Activated CD4-positive, alpha-beta memory T cell treated with anti-CD3 and anti-CD28 coated beads for 36 hours (primary cell): ENCODE measurements at regions of chr5 and their contacts with region 1.

Region 1: DNA sequence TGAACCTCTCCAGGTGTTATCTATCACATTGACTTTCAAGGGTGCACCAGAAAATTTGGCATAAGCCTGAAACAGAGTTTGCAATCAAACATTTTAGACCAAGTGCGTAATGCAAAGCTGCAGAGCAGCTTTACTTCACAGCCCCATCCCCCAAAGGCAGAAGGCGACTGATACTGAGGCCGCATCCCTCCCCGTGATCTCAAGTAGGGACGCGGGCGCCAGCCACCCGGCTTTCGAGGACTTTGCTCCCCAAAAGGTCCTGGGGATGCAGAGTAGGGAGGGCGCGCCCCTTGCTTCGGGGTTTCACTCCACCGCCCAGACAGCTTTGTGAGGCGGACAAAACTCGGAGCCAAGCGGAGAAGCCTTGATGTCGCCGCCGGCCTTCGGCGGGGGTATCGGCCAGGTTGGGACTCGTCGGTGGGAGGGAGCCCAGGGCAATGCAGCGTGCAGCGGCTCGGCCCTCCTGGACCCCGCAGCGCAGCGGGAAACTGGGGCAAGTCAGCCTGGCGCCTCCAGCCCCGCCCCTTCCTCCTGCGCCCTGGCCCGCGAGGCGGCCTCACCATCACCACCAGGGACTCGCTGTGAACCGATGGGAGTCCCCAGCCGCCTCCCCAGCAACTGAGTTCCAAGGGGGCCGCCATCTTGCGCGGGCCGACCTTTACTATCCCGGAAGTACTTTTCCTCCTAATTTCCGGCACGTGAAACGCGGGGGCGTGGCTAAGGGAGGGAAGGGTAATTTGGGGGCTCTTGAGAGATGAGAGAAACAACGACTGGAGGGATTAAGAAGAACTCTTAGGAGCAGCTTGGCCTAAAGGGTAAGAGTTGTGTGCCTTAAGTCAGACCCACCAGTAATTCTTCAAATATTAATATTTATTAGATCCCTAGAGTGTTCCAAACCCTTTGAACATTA is at the start of gene MTX3:
- DNase-seq: peak; percentile 93
- H3K4me3 Mint-ChIP-seq: peak within 1 kb of the TSS; percentile 84
- H3K27ac Mint-ChIP-seq: peak within 1 kb of the TSS; percentile 96
- H3K4me1 Mint-ChIP-seq: peaks cover 40% of the 10 kb centered on the region
- H3K27me3 Mint-ChIP-seq: peaks cover 2% of the 10 kb centered on the region
- total RNA-seq, gene MTX3: 13.3 to 16.8 TPM

Region 2: GRCh38 chr5:79560771-79561524 is 429.9 kb before region 1 on chr5:
- CTCF ChIA-PET with region 1: no interaction called
- POLR2A ChIA-PET with region 1: no interaction called
- intact Hi-C with region 1: loop called (anchors 1 kb)
- DNase-seq: peak; percentile 51
- H3K4me3 Mint-ChIP-seq: peak overlapping the region; percentile 30
- H3K27ac Mint-ChIP-seq: peak overlapping the region; percentile 99
- H3K4me1 Mint-ChIP-seq: peaks cover 42% of the 10 kb centered on the region
- H3K27me3 Mint-ChIP-seq: peaks cover 1% of the 10 kb centered on the region

Region 3: DNA sequence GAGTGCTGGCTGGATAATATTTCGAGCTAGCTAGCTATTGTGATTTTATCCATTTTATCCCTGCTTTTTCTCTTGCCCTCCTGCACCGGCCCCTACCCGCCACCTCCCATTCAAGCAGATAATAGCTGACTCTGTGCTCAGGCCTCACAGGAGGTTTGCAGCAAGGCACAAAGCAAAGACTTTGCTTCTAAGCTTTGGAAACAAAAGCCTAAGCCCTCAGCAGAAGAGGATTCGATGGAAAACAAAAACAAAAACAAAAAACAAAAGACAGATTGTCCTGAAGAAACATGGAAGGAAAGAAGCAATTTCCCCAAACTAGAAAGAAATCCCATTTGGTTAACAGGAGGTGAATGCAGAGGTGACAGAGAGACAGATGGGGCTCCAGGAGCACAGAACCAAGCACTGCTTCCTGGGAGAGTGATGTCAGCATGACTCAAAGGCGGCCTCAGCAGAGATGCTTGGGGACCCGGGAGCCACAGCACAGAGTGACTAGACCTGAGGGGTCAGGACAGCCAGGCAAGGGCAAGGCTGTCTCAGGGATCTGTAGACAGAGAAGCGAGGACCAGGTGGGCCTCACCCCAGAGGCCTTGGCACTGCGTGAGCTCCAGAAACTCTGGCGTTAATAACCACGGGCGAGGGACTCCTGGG is 28.2 kb before region 1 on chr5:
- CTCF ChIA-PET with region 1: interaction called, 9 read pairs
- POLR2A ChIA-PET with region 1: interaction called, 37 read pairs
- intact Hi-C with region 1: loop called (anchors 1 kb)
- DNase-seq: peak; percentile 85
- H3K4me3 Mint-ChIP-seq: peak overlapping the region; percentile 45
- H3K27ac Mint-ChIP-seq: peak overlapping the region; percentile 92
- H3K4me1 Mint-ChIP-seq: peaks cover 34% of the 10 kb centered on the region
- H3K27me3 Mint-ChIP-seq: peaks cover 22% of the 10 kb centered on the region

Region 4: GRCh38 chr5:80060966-80061365 is 70.1 kb after region 1 on chr5:
- CTCF ChIA-PET with region 1: interaction called, 4 read pairs
- POLR2A ChIA-PET with region 1: interaction called, 4 read pairs
- intact Hi-C with region 1: loop called (anchors 1 kb)
- DNase-seq: no peak
- H3K4me3 Mint-ChIP-seq: no peak overlapping the region
- H3K27ac Mint-ChIP-seq: no peak overlapping the region
- H3K4me1 Mint-ChIP-seq: peaks cover 11% of the 10 kb centered on the region
- H3K27me3 Mint-ChIP-seq: no peaks in the 10 kb centered on the region

Region 5: GRCh38 chr5:80191991-80192398 is 201.1 kb after region 1 on chr5:
- CTCF ChIA-PET with region 1: no interaction called
- POLR2A ChIA-PET with region 1: no interaction called
- intact Hi-C with region 1: loop called (anchors 5 kb)
- DNase-seq: peak; percentile 63
- H3K4me3 Mint-ChIP-seq: peak overlapping the region; percentile 61
- H3K27ac Mint-ChIP-seq: peak overlapping the region; percentile 92
- H3K4me1 Mint-ChIP-seq: peaks cover 78% of the 10 kb centered on the region
- H3K27me3 Mint-ChIP-seq: no peaks in the 10 kb centered on the region

Region 6: DNA sequence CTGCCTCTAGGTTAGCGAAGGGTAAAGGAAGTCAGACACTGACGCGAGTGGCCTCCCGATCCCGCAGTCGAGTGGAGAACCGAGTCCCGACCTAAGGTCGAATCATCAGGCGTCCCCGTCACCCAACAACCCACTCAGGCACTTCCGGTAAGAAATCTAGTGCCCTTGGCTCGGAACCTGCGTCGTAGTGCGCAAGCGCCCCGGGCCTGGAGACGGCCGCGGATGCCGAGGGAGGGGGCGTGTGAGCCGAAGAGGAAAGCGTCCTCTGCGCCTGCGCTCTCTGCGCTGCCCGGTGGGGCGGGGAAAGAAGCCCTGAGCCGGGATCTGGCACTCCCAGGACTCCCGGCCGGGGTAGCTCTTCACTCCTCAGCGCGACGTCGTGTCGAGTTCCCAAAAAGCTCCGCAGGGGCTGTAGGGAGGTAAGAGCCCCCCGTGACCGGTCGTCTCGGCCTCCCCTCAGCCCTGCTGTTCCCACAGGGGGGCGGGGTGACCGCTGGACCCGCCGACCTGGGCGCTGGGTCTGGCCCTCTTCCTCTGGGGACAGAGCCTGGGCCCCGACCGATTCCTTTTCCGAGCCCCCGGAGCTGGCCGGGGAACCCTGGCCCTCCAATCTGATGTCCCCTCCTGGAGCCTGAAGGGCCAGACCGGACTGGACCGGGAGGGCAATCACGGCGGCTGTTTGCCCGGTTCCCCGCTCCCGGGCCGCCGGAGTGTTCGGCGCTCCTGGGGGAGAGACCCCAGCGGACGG is 417.1 kb after region 1 on chr5 and contains the start of gene ZFYVE16:
- CTCF ChIA-PET with region 1: no interaction called
- POLR2A ChIA-PET with region 1: no interaction called
- intact Hi-C with region 1: loop called (anchors 5 kb)
- DNase-seq: peak; percentile 98
- H3K4me3 Mint-ChIP-seq: peak within 1 kb of the TSS; percentile 92
- H3K27ac Mint-ChIP-seq: peak within 1 kb of the TSS; percentile 97
- H3K4me1 Mint-ChIP-seq: peaks cover 16% of the 10 kb centered on the region
- H3K27me3 Mint-ChIP-seq: no peaks in the 10 kb centered on the region
- total RNA-seq, gene ZFYVE16: 12.1 to 15.7 TPM